MCF 10A (cell line): ENCODE measurements at regions of chr1 and their contacts with region 1.

Region 1: DNA sequence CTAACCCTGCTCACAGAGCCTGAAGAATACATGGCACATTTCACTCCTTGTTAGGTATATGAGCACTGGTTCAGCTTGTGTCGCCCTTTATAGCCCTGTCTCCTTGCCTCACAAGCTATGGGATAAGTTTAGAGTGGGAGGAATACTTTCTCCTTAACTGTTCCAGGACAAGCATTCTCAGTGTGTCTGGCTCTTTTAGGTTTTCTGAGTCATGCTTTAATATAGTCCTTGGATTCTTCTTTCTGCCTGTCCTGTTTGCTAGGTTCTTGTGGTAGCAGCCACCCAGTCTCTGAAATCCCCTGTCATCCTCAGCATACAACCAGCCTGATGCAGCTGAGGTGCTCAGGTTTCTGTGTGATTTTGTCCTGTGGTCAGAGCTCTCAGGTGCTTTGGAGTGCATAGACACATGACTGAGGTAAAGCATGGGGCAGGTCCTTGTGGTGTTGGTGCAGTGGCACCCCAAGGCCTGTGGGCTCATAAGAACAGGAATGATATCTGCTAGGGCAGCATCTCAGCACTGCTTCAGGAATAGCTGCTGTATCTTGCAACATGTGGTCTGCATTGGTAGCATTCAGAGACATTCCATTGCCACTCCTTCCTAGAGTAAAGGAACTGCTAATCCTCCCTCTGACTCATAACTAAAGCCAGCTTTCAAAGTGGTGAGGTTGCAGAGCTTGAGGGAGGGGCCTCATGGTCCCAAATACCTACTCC is 14.2 kb upstream of the CASQ2 start:
- DNase-seq: peak; percentile 93
- H3K4me3 Mint-ChIP-seq: peak overlapping the region; percentile 54
- H3K27ac Mint-ChIP-seq: peak overlapping the region; percentile 99
- H3K4me1 Mint-ChIP-seq: peaks cover 34% of the 10 kb centered on the region
- H3K27me3 Mint-ChIP-seq: no peaks in the 10 kb centered on the region
- CTCF ChIP-seq: no peak

Region 2: GRCh38 chr1:115456441-115456961 is 326.2 kb before region 1 on chr1:
- CTCF ChIA-PET with region 1: no interaction called
- POLR2A ChIA-PET with region 1: no interaction called
- intact Hi-C with region 1: no loop called
- DNase-seq: no peak
- H3K4me3 Mint-ChIP-seq: no peak overlapping the region
- H3K27ac Mint-ChIP-seq: peak overlapping the region; percentile 65
- H3K4me1 Mint-ChIP-seq: peaks cover 11% of the 10 kb centered on the region
- H3K27me3 Mint-ChIP-seq: no peaks in the 10 kb centered on the region
- CTCF ChIP-seq: no peak

Region 3: DNA sequence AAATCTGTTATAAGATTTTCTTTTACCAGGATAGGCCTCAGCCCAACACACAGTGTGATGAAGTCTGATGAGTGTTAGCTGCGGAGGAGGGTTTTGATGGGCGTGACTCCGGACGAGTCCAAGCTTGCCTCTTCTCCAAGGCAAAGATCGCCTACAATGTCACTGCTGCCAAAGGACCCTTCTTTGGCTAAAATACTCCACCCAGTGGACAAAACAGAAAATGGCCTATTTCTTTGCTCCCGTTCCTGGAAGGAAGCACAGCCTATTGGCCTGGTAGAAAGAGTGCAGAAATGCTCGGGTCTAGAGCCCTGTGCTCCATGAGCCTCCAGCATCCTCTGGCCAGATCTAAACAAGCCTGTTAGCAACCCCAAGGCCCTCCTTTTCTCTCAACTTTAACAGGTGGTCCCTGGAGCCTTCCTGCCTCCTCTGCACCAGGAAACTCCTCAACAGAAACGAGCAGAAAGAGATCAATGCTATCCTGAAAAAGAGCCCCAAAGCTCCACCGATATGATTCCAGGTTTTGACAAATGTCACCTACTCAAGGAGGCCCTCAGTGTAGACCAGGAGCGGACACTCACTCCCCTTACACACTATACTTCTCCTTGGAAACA is 10.8 kb before region 1 on chr1:
- CTCF ChIA-PET with region 1: interaction called, 30 read pairs
- POLR2A ChIA-PET with region 1: interaction called, 64 read pairs
- intact Hi-C with region 1: no loop called
- DNase-seq: peak; percentile 94
- H3K4me3 Mint-ChIP-seq: no peak overlapping the region
- H3K27ac Mint-ChIP-seq: peak overlapping the region; percentile 49
- H3K4me1 Mint-ChIP-seq: peaks cover 16% of the 10 kb centered on the region
- H3K27me3 Mint-ChIP-seq: no peaks in the 10 kb centered on the region
- CTCF ChIP-seq: peak; percentile 70

Region 4: DNA sequence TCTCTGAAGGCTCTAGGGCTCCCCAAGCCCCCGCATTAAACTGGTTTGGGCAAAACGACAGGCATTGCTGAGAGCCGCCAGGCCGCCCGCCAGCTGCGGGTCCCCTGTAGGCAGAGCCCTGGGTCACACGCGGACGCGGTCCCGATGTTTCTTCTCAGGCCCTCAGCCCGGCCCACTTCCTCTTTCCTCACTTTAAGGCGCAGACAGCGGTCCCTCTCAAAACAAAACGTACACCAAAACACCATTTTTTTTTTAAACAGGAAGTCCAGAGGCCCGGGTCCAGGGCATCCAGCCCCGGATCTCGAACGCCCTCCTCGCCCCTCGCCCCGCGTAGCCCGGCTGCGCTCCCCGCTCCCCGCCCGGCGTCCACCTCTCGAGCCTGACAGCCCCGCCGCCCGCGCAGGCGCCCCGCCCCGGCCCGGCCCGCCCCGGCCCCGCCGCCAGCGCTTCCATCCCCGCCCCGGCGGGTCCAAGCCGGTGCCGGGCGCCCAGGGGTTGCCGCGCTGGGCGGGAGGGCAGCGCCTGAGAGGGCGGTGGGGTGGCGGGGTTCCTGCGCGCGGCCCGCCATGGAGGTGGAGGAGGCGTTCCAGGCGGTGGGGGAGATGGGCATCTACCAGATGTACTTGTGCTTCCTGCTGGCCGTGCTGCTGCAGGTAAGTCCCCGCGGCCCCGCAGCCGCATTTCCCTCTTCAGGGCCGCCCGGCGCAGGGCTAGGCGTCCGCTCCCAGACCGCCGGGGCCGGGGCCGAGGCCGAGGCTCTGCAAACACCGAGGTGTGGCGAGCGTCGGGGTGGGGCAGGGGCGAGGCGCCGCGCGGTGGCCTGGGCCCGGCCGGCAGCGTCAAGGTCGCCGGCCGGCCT is 193.6 kb after region 1 on chr1 and contains the start of gene SLC22A15:
- CTCF ChIA-PET with region 1: interaction called, 5 read pairs
- POLR2A ChIA-PET with region 1: interaction called, 58 read pairs
- intact Hi-C with region 1: no loop called
- DNase-seq: peak; percentile 54
- H3K4me3 Mint-ChIP-seq: peak within 1 kb of the TSS; percentile 86
- H3K27ac Mint-ChIP-seq: peak within 1 kb of the TSS; percentile 82
- H3K4me1 Mint-ChIP-seq: peaks cover 20% of the 10 kb centered on the region
- H3K27me3 Mint-ChIP-seq: no peaks in the 10 kb centered on the region
- CTCF ChIP-seq: no peak
- total RNA-seq, gene SLC22A15: 32.4 and 33.5 TPM in 2 replicates

Region 5: DNA sequence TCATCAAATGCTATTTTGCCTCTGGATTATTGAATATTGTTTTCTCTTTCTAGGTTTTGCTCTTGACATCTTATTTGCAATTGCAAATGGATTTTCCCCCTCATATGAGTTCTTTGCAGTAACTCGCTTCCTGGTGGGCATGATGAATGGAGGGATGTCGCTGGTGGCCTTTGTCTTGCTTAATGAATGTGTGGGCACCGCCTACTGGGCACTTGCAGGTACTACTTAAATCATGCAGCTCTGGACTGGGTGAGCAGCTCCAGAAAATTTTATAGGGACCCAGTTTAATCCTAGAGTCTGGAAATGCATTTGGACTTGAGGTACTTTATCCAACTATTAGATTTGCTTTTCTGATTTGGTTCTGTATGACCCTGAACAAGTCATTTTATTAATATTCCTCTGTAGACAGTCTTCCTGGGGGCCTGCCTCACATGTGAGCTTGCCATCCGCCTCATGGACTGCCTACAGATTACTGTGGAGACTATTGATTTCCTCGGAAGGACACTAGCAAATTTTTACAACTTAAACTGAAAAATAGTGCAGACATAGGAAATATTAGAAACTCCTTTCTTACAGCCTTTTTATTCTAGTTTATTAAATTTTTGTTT is 238.0 kb after region 1 on chr1:
- CTCF ChIA-PET with region 1: interaction called, 8 read pairs
- POLR2A ChIA-PET with region 1: interaction called, 19 read pairs
- intact Hi-C with region 1: no loop called
- DNase-seq: peak; percentile 75
- H3K4me3 Mint-ChIP-seq: no peak overlapping the region
- H3K27ac Mint-ChIP-seq: no peak overlapping the region
- H3K4me1 Mint-ChIP-seq: peaks cover 5% of the 10 kb centered on the region
- H3K27me3 Mint-ChIP-seq: no peaks in the 10 kb centered on the region
- CTCF ChIP-seq: peak; percentile 72